Uterus (tissue), 4 donors: ENCODE measurements at regions of chr9 and their contacts with region 1.

Region 1: DNA sequence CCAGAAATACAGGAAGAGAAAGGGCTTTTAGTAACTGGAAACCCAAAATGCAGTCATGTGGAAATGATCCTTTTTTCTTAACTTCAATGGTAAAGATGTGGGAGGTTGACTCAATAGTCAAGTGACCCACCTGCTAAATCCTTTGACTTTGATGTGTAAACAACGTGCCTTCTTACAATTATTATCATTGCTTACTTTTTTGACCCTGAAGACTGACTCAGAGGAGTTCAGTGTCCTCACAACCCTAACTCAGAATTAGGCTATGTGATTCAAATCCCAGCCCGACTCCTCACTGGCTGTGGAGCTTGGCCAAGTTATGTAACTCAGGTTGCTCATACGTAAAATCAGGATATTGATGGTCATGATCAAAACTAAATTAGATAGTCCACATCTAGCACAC is 27.9 kb downstream of the ANXA1 start:
- DNase-seq: no peak
- H3K4me3 ChIP-seq: no peak overlapping the region
- H3K27ac ChIP-seq: no peak overlapping the region
- H3K4me1 ChIP-seq: no peaks in the 10 kb centered on the region
- H3K27me3 ChIP-seq: no peaks in the 10 kb centered on the region
- CTCF ChIP-seq: no peak
- POLR2A ChIP-seq: no peak

Region 2: GRCh38 chr9:73116031-73116430 is 63.6 kb before region 1 on chr9:
- intact Hi-C with region 1: loop called (anchors 10 kb)
- DNase-seq: no peak
- H3K4me3 ChIP-seq: no peak overlapping the region
- H3K27ac ChIP-seq: peak overlapping the region in 1 of 2 donors; percentile 26
- H3K4me1 ChIP-seq: no peaks in the 10 kb centered on the region
- H3K27me3 ChIP-seq: no peaks in the 10 kb centered on the region
- CTCF ChIP-seq: no peak
- POLR2A ChIP-seq: no peak